ENCODE measurements at regions of chr2 and their contacts with region 1.

Region 1: DNA sequence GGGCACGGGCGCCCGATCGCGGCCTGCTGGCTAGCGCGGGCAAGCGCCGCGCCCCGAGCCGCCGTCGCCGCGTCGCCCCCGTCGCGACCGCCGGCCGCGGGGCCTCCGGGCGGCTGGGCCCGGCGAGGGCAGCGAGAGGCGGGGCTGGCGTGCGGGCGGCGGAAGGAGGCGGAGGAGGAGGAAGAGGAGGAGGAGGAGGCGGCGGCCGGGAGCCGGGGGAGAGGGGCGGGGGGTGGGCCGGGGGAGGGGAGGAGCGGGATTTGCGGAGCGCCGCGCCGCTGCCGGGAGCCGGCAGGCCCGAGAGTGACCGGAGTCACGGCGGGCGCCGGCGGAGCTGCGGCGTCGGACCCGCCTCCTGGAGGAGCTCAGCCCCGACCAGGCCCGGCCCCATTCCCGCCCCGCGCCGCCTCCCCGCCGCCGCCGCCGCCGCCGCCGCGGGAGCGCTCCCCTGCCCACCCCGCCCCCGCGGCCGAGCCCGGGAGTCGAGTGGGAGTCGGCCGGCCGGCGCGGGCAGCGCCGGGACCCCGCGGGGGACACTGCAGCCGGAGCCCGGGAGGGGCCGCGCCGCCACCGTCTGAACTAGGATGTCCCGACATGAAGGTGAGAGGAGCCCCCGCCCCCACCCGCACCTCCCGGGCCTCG is at the start of gene KCMF1:
- DNase-seq: peak; percentile 78
- H3K4me3 ChIP-seq: peak within 1 kb of the TSS; percentile 97
- H3K27ac ChIP-seq: peak within 1 kb of the TSS; percentile 99
- H3K4me1 ChIP-seq: peaks cover 4% of the 10 kb centered on the region
- H3K27me3 ChIP-seq: no peaks in the 10 kb centered on the region
- CTCF ChIP-seq: no peak
- total RNA-seq, gene KCMF1: 108 and 110 TPM in 2 replicates

Region 2: GRCh38 chr2:84905181-84906107 is 65.5 kb before region 1 on chr2 and contains the start of gene TMSB10:
- CTCF ChIA-PET with region 1: interaction called, 11 read pairs
- POLR2A ChIA-PET with region 1: no interaction called
- intact Hi-C with region 1: no loop called
- DNase-seq: peak; percentile 90
- H3K4me3 ChIP-seq: peak within 1 kb of the TSS; percentile 96
- H3K27ac ChIP-seq: peak within 1 kb of the TSS; percentile 96
- H3K4me1 ChIP-seq: peaks cover 13% of the 10 kb centered on the region
- H3K27me3 ChIP-seq: no peaks in the 10 kb centered on the region
- CTCF ChIP-seq: no peak
- total RNA-seq, gene TMSB10: 2,146 and 2,488 TPM in 2 replicates